ENCODE measurements at regions of chr17 and their contacts with region 1.

Region 1: DNA sequence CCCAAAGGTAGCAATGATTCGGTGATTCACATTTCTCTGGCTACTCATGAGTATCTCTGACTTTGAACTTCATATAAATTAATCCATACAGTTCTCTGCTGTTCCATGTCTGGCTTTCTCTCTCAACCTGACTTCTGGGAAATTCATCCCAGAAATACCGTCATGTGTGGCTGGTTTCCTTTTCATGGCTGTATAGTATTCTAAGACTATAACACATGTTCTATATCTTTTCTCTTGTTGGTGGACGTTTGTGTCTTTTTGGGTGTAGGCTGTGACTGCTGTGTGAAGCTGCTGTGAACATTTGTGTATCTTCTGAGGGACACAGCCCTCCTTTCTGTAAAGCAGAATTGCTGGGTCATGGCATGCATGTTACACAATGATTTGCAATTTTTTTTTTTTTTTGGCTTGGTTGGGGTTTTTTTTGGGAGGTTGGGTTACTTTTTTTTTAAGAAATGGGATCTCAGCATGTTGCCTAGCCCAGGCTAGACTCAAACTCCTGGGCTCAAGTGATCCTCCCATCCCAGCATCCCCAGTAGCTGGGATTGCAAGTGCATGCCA is 6.3 kb downstream of the TTYH2 start:
- DNase-seq: no peak
- ATAC-seq: no peak
- H3K4me3 ChIP-seq: no peak overlapping the region
- H3K27ac ChIP-seq: no peak overlapping the region
- H3K4me1 ChIP-seq: no peaks in the 10 kb centered on the region
- H3K27me3 ChIP-seq: no peaks in the 10 kb centered on the region
- CTCF ChIP-seq: no peak

Region 2: GRCh38 chr17:73991254-73991653 is 228.4 kb before region 1 on chr17:
- CTCF ChIA-PET with region 1: no interaction called
- POLR2A ChIA-PET with region 1: no interaction called
- intact Hi-C with region 1: no loop called
- DNase-seq: no peak
- ATAC-seq: no peak
- H3K4me3 ChIP-seq: no peak overlapping the region
- H3K27ac ChIP-seq: no peak overlapping the region
- H3K4me1 ChIP-seq: no peaks in the 10 kb centered on the region
- H3K27me3 ChIP-seq: peaks cover 26% of the 10 kb centered on the region
- CTCF ChIP-seq: no peak

Region 3: GRCh38 chr17:74235040-74235581 is 15.5 kb after region 1 on chr17:
- CTCF ChIA-PET with region 1: no interaction called
- POLR2A ChIA-PET with region 1: no interaction called
- intact Hi-C with region 1: no loop called
- DNase-seq: no peak
- ATAC-seq: no peak
- H3K4me3 ChIP-seq: no peak overlapping the region
- H3K27ac ChIP-seq: no peak overlapping the region
- H3K4me1 ChIP-seq: no peaks in the 10 kb centered on the region
- H3K27me3 ChIP-seq: no peaks in the 10 kb centered on the region
- CTCF ChIP-seq: no peak

Region 4: GRCh38 chr17:74259667-74260524 is 40.2 kb after region 1 on chr17:
- CTCF ChIA-PET with region 1: no interaction called
- POLR2A ChIA-PET with region 1: no interaction called
- intact Hi-C with region 1: loop called (anchors 1 kb)
- DNase-seq: peak; percentile 76
- ATAC-seq: peak; percentile 92
- H3K4me3 ChIP-seq: no peak overlapping the region
- H3K27ac ChIP-seq: no peak overlapping the region
- H3K4me1 ChIP-seq: peaks cover 8% of the 10 kb centered on the region
- H3K27me3 ChIP-seq: no peaks in the 10 kb centered on the region
- CTCF ChIP-seq: peak; percentile 54; the same call in 1 of the 2 replicates